ENCODE measurements at regions of chr2 and their contacts with region 1.

Region 1: GRCh38 chr2:112254466-112255239 is at the start of gene ZC3H8:
- DNase-seq: peak; percentile 85 to 98 (median 94)

Region 2: GRCh38 chr2:112433932-112434730 is 179.5 kb after region 1 on chr2:
- intact Hi-C with region 1: loop called (anchors 5 kb)
- DNase-seq: peak in 3 of 42 donors; percentile 4 to 43 (median 11)

Region 3: GRCh38 chr2:112584134-112584890 is 329.7 kb after region 1 on chr2 and contains the start of gene CHCHD5:
- intact Hi-C with region 1: loop called (anchors 10 kb)
- DNase-seq: peak; percentile 90 to 98 (median 96)

Measured in head of caudate nucleus (tissue), 42 donors.